ENCODE measurements at regions of chr15 and their contacts with region 1.

Region 1: DNA sequence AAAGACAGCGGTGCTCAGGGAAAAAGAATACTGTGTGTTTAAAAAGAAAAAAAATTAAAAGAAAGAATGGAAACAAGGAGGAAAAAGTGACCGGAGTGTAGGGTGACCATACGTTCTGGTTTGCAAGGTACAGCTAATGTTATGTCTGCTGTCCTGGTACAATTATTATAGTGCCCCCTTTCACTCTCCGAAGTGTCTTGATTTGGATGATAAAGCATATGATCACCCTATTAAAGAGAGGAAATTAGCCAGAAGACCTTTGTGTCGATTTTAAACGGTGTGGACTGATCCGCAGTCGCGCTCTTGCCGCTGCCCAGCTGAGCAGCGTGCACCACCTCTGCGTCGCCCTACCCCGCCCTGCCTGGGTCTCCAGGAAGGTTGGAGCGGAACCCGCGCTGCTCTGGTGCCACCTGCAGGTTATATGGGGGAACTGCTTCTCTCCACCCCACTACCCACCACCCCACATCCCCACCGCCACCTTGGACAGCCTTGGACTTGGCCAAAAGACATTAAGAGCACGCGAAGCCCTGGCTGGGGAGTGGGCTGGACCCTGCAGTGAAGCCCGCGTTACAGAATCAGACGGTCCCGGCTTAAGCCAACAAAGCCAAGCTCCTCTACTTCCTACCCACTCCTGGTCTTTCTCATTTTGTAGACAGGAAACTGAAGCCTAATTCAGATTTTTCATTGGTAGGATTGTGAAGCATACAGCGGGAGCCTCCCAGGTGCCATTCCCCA is 41.2 kb upstream of the UBE2Q2 start:
- DNase-seq: peak; percentile 75 to 85 (median 81)
- H3K4me3 ChIP-seq: no peak overlapping the region
- H3K27ac ChIP-seq: no peak overlapping the region
- H3K4me1 ChIP-seq: no peaks in the 10 kb centered on the region
- H3K27me3 ChIP-seq: no peaks in the 10 kb centered on the region
- CTCF ChIP-seq: peak; percentile 63 to 73 (median 69)
- EP300 ChIP-seq: no peak
- POLR2A ChIP-seq: no peak

Region 2: DNA sequence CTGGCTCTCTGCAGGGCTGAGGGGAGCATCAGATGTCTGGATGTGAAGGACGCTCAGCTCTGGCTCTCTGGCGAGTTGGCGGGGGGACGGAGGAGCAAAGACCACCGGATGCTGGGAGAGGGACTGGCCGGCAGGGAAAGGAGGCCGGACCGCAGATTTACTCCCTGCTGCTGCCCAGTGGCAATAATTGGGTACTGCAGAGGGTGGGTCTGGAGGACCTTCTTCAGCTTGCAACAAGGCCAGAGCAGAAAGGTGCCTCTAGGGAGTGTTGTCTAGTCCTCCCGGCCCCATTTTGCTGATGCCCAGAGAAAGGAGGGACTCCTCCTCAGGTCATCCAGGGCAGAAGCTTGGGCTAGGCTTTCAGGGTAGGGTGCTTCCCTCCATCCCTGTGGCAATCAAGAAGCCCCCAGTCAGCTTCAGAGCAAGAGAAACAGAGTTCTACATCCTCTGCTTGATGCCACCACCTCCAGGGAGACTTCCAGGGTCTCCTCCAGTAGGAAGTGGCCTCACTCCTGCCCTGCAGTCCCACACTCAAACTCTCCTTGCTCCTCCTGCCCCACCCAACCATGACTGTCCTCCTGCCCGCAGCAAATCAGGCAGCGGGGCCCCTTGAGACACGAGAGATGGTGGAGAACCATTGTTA is 69.1 kb before region 1 on chr15:
- intact Hi-C with region 1: loop called in 3 of 4 experiments (anchors 5 to 10 kb)
- DNase-seq: peak; percentile 65 to 83 (median 82)
- H3K4me3 ChIP-seq: no peak overlapping the region
- H3K27ac ChIP-seq: no peak overlapping the region
- H3K4me1 ChIP-seq: peaks cover 10% of the 10 kb centered on the region
- H3K27me3 ChIP-seq: no peaks in the 10 kb centered on the region
- CTCF ChIP-seq: peak; percentile 70 to 87 (median 80)
- EP300 ChIP-seq: no peak
- POLR2A ChIP-seq: no peak

Region 3: GRCh38 chr15:75738647-75739331 is 63.2 kb before region 1 on chr15:
- intact Hi-C with region 1: loop called in 1 of 4 experiments (anchors 10 kb)
- DNase-seq: peak; percentile 96 to 98 (median 96)
- H3K4me3 ChIP-seq: peak overlapping the region; percentile 81
- H3K27ac ChIP-seq: peak overlapping the region in 1 of 2 donors; percentile 49
- H3K4me1 ChIP-seq: peaks cover 10% of the 10 kb centered on the region
- H3K27me3 ChIP-seq: no peaks in the 10 kb centered on the region
- CTCF ChIP-seq: no peak
- EP300 ChIP-seq: no peak
- POLR2A ChIP-seq: no peak

Measured in ovary (tissue), 10 donors.